ENCODE measurements at regions of chr4 and their contacts with region 1.

Region 1: GRCh38 chr4:53914313-53915016 is 149.9 kb downstream of the CHIC2 start:
- DNase-seq: no peak

Region 2: GRCh38 chr4:54228056-54228527 is 313.6 kb after region 1 on chr4:
- in situ Hi-C with region 1: loop called (anchors 10 kb)
- DNase-seq: peak; percentile 74

Measured in KBM-7 (cell line).